ENCODE measurements at regions of chr17 and their contacts with region 1.

Region 1: GRCh38 chr17:29148790-29149430 is 31.3 kb downstream of the MYO18A start:
- DNase-seq: peak; percentile 96
- ATAC-seq: peak; percentile 95
- H3K4me3 Mint-ChIP-seq: peak overlapping the region; percentile 83
- H3K27ac Mint-ChIP-seq: peak overlapping the region; percentile 89
- H3K4me1 Mint-ChIP-seq: peaks cover 45% of the 10 kb centered on the region
- H3K27me3 Mint-ChIP-seq: no peaks in the 10 kb centered on the region
- CTCF ChIP-seq: peak; percentile 27

Region 2: DNA sequence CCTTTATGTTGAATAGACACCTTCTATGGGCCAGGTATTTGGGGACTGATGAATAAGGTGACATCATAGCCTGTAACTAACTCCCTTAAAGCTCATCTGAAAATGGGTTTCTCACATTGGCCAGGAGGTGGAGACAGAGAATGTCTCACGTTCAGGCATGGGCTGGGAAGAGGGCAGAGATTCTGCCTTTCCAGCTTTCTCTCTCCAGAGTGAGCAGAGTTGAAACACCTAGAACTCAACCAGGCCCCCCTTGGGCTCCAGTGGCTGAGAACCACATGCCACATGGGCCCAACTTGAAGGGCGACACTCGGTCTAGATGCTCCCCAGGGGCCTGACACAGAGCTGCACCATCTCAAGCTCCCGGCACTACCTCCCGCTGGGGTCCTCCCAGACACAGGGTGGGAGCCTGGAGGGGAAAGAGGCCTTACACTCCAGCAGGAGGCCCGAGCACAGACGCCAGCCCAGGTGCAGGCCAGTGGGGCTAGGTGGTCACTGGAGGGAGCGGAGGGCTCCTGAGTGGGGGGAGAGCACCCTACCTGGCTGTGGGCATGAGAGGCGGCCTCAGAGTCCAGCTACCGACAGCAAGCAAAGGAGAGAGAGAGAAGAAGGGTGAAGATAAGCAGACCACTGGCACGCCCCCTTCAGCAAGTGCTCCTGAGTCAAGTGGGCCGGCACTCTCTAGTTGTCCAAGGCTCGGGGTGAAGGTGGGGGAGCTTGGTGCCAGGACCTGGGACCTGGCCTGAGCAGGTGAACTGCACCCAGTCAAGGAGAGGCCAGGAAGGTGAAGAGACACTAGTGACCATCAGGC is 24.6 kb before region 1 on chr17:
- CTCF ChIA-PET with region 1: interaction called, 61 read pairs
- POLR2A ChIA-PET with region 1: interaction called, 11 read pairs
- intact Hi-C with region 1: loop called (anchors 1 kb)
- DNase-seq: no peak
- ATAC-seq: peak; percentile 90
- H3K4me3 Mint-ChIP-seq: no peak overlapping the region
- H3K27ac Mint-ChIP-seq: no peak overlapping the region
- H3K4me1 Mint-ChIP-seq: no peaks in the 10 kb centered on the region
- H3K27me3 Mint-ChIP-seq: no peaks in the 10 kb centered on the region
- CTCF ChIP-seq: no peak

Region 3: DNA sequence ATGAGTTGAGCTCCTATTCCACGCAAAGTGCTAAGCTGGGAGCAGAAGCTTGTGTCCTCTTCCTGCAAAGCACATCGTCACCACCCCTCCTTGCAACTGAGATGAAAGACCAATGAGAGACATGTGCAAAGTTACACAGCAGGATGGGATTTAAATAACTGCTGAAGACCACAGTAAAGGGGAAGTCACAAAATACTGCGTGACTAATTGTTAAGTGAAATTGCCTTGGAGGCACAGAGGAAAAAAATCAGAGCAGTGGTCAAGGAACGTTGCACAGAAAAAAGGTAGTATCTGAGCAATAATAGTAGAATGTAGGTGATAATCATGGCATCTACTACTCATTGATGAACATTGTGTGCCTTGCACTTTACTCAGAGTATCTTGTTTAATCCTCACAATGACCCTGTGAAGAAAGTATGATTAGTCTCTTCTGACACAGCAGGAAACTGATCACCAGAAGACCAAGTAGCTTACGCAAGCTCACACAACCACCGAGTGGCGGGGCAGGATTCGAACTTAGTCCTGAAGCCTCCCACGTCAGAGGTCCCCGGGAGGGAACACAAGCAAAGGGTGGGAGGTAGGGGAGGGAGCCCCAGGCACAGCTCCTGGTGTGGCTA is 46.7 kb after region 1 on chr17:
- CTCF ChIA-PET with region 1: interaction called, 11 read pairs
- POLR2A ChIA-PET with region 1: interaction called, 3 read pairs
- intact Hi-C with region 1: no loop called
- DNase-seq: no peak
- ATAC-seq: peak; percentile 89
- H3K4me3 Mint-ChIP-seq: peak overlapping the region; percentile 71
- H3K27ac Mint-ChIP-seq: peak overlapping the region; percentile 67
- H3K4me1 Mint-ChIP-seq: peaks cover 25% of the 10 kb centered on the region
- H3K27me3 Mint-ChIP-seq: no peaks in the 10 kb centered on the region
- CTCF ChIP-seq: no peak

Region 4: GRCh38 chr17:29369831-29370735 is 221.2 kb after region 1 on chr17:
- CTCF ChIA-PET with region 1: interaction called, 6 read pairs
- POLR2A ChIA-PET with region 1: no interaction called
- intact Hi-C with region 1: loop called (anchors 5 kb)
- DNase-seq: peak; percentile 29
- ATAC-seq: peak; percentile 92
- H3K4me3 Mint-ChIP-seq: no peak overlapping the region
- H3K27ac Mint-ChIP-seq: no peak overlapping the region
- H3K4me1 Mint-ChIP-seq: no peaks in the 10 kb centered on the region
- H3K27me3 Mint-ChIP-seq: no peaks in the 10 kb centered on the region
- CTCF ChIP-seq: peak; percentile 46

Region 5: GRCh38 chr17:29568331-29569244 is 419.7 kb after region 1 on chr17 and contains the start of gene TP53I13:
- CTCF ChIA-PET with region 1: interaction called, 3 read pairs
- POLR2A ChIA-PET with region 1: no interaction called
- intact Hi-C with region 1: loop called (anchors 10 kb)
- DNase-seq: peak; percentile 83
- ATAC-seq: peak; percentile 65
- H3K4me3 Mint-ChIP-seq: peak within 1 kb of the TSS; percentile 97
- H3K27ac Mint-ChIP-seq: peak within 1 kb of the TSS; percentile 97
- H3K4me1 Mint-ChIP-seq: peaks cover 32% of the 10 kb centered on the region
- H3K27me3 Mint-ChIP-seq: no peaks in the 10 kb centered on the region
- CTCF ChIP-seq: no peak
- total RNA-seq, gene TP53I13: 65.1 and 71.2 TPM in 2 replicates

Measured in activated B cell treated with CpG ODN at 0.5 μM for 24 hours (primary cell).